CD4-positive, alpha-beta T cell (primary cell): ENCODE measurements at regions of chr1 and their contacts with region 1.

Region 1: DNA sequence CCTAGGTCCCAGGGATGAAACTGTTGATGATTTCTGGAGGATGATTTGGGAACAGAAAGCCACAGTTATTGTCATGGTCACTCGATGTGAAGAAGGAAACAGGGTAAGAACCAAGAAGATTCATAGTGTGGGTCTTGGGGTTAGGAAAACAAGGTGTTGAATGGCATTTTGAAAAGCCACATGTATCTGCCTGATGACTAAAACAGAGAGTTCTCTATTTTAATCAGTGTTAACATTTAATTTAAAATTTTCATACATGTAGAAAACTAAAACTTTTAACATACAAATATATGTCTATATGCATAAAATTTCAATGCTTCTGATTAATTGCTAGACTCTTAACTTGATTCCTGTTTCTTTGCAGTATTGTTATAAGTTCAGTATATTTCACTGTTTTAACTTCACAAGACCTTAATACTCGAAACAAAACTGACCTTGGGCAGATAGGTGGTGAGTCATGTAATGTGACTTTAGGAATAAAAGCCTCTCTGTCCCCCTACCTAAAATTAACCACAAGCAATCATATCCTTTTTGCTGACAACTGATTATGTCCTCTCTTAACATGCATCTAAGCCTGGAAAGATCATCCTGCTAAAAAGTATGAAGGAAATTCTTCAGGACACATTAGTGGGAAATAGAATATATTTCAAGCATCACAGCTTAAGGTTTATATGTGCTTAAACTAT is 95.6 kb downstream of the PTPRC start:
- DNase-seq: no peak
- ATAC-seq: no peak
- H3K4me3 ChIP-seq: no peak overlapping the region
- H3K4me3 Mint-ChIP-seq: no peak overlapping the region
- H3K27ac ChIP-seq: no peak overlapping the region
- H3K27ac Mint-ChIP-seq: peak overlapping the region; percentile 57
- H3K4me1 ChIP-seq: peaks cover 4% of the 10 kb centered on the region
- H3K4me1 Mint-ChIP-seq: peaks cover 78% of the 10 kb centered on the region
- H3K27me3 ChIP-seq: no peaks in the 10 kb centered on the region
- H3K27me3 Mint-ChIP-seq: no peaks in the 10 kb centered on the region
- CTCF ChIP-seq: no peak

Region 2: DNA sequence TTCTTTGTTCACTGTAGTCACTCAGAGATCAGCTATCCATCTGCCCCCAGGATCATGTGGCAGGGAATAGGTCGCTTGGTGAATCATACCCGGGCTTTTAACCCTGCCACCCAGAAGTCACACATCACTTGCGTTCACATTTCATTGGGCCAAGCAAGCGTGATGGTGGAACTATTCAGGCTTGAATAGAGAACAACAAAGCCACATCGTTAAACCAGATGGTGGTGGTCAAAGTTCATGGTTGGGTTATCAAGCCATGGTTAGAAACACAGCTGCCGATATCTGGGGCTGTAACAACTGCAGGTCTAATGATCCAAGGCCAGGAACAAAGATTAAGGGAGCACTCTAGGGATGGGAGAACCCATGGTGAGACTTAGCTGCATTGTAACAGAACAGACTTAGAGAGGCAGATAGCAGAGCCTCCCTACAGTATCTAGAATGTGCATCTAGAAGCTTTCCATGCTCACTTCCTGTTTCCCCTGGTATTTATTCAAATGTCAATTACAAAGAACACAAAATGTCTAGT is 135.6 kb before region 1 on chr1:
- CTCF ChIA-PET with region 1: no interaction called
- POLR2A ChIA-PET with region 1: no interaction called
- intact Hi-C with region 1: no loop called
- DNase-seq: peak in 1 of 14 experiments; percentile 26
- ATAC-seq: peak; percentile 58
- H3K4me3 ChIP-seq: no peak overlapping the region
- H3K4me3 Mint-ChIP-seq: peak overlapping the region; percentile 77
- H3K27ac ChIP-seq: peak overlapping the region in 1 of 2 donors; percentile 29
- H3K27ac Mint-ChIP-seq: peak overlapping the region; percentile 91
- H3K4me1 ChIP-seq: peaks cover 27% of the 10 kb centered on the region
- H3K4me1 Mint-ChIP-seq: peaks cover 93% of the 10 kb centered on the region
- H3K27me3 ChIP-seq: no peaks in the 10 kb centered on the region
- H3K27me3 Mint-ChIP-seq: no peaks in the 10 kb centered on the region
- CTCF ChIP-seq: no peak

Region 3: GRCh38 chr1:198713081-198713480 is 21.4 kb before region 1 on chr1:
- CTCF ChIA-PET with region 1: no interaction called
- POLR2A ChIA-PET with region 1: interaction called, 4 read pairs
- intact Hi-C with region 1: loop called in 1 of 2 experiments (anchors 2 kb)
- DNase-seq: no peak
- ATAC-seq: no peak
- H3K4me3 ChIP-seq: no peak overlapping the region
- H3K4me3 Mint-ChIP-seq: peak overlapping the region; percentile 34
- H3K27ac ChIP-seq: no peak overlapping the region
- H3K27ac Mint-ChIP-seq: peak overlapping the region; percentile 51
- H3K4me1 ChIP-seq: peaks cover 4% of the 10 kb centered on the region
- H3K4me1 Mint-ChIP-seq: peaks cover 78% of the 10 kb centered on the region
- H3K27me3 ChIP-seq: no peaks in the 10 kb centered on the region
- H3K27me3 Mint-ChIP-seq: no peaks in the 10 kb centered on the region
- CTCF ChIP-seq: no peak

Region 4: GRCh38 chr1:198720035-198720434 is 14.4 kb before region 1 on chr1:
- CTCF ChIA-PET with region 1: no interaction called
- POLR2A ChIA-PET with region 1: interaction called, 4 read pairs
- intact Hi-C with region 1: loop called (anchors 2 kb)
- DNase-seq: no peak
- ATAC-seq: no peak
- H3K4me3 ChIP-seq: no peak overlapping the region
- H3K4me3 Mint-ChIP-seq: peak overlapping the region; percentile 15
- H3K27ac ChIP-seq: no peak overlapping the region
- H3K27ac Mint-ChIP-seq: peak overlapping the region; percentile 51
- H3K4me1 ChIP-seq: peaks cover 13% of the 10 kb centered on the region
- H3K4me1 Mint-ChIP-seq: peaks cover 64% of the 10 kb centered on the region
- H3K27me3 ChIP-seq: no peaks in the 10 kb centered on the region
- H3K27me3 Mint-ChIP-seq: no peaks in the 10 kb centered on the region
- CTCF ChIP-seq: no peak

Region 5: DNA sequence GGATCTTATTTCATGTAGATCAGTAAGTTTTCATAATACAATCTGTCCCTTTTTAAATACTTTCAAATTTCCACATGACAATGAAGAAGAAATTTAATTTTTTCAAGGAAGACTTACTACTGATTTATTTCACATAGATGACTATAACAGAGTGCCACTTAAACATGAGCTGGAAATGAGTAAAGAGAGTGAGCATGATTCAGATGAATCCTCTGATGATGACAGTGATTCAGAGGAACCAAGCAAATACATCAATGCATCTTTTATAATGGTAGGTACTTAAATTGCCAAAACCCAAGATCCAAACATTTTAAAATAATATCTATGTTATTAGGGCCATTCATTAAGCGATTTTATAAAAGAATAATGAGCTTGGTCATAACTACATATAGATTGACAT is 14.8 kb after region 1 on chr1:
- CTCF ChIA-PET with region 1: no interaction called
- POLR2A ChIA-PET with region 1: interaction called, 7 read pairs
- intact Hi-C with region 1: loop called in 1 of 2 experiments (anchors 2 kb)
- DNase-seq: no peak
- ATAC-seq: no peak
- H3K4me3 ChIP-seq: no peak overlapping the region
- H3K4me3 Mint-ChIP-seq: no peak overlapping the region
- H3K27ac ChIP-seq: no peak overlapping the region
- H3K27ac Mint-ChIP-seq: peak overlapping the region; percentile 50
- H3K4me1 ChIP-seq: peaks cover 2% of the 10 kb centered on the region
- H3K4me1 Mint-ChIP-seq: peaks cover 18% of the 10 kb centered on the region
- H3K27me3 ChIP-seq: no peaks in the 10 kb centered on the region
- H3K27me3 Mint-ChIP-seq: no peaks in the 10 kb centered on the region
- CTCF ChIP-seq: no peak

Region 6: GRCh38 chr1:199046618-199047017 is 312.2 kb after region 1 on chr1:
- CTCF ChIA-PET with region 1: no interaction called
- POLR2A ChIA-PET with region 1: no interaction called
- intact Hi-C with region 1: no loop called
- DNase-seq: no peak
- ATAC-seq: no peak
- H3K4me3 ChIP-seq: no peak overlapping the region
- H3K4me3 Mint-ChIP-seq: no peak overlapping the region
- H3K27ac ChIP-seq: no peak overlapping the region
- H3K27ac Mint-ChIP-seq: no peak overlapping the region
- H3K4me1 ChIP-seq: no peaks in the 10 kb centered on the region
- H3K4me1 Mint-ChIP-seq: peaks cover 15% of the 10 kb centered on the region
- H3K27me3 ChIP-seq: no peaks in the 10 kb centered on the region
- H3K27me3 Mint-ChIP-seq: no peaks in the 10 kb centered on the region
- CTCF ChIP-seq: no peak